CD4-positive, alpha-beta T cell (primary cell): ENCODE measurements at regions of chr2 and their contacts with region 1.

Region 1: DNA sequence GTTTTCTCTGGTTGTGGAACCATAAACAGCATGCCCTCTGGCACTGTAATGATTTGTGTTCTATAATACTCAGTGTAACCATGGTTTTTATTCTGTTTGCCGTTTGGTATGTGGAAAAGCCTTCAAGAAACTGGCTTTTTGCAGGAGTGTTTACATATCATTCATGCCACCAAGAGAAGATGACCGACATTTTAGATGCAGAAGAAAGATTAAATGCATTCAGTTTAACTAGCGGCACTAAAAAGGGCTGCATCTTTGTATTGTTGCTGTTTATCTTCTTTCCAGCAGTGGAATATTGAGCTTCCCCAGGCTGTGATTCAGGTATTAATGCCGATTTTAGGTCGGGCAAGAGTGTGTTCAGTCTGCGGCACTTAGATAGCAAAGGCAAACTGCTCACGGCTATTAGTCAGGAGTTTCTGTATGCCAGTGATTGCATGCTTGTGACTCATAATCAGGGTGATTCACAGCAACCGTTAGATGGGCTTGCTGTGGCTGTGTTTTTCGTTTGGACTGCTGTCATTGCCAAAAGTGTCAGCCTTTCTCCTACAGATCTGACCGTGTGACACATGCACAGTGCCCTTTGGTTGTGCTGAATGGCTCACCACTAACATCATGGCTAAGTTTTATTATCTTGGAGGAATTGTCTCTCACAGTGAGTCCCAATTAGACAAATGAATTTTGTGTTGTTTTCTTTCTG is 479.7 kb downstream of the PARD3B start:
- DNase-seq: peak in 1 of 14 experiments; percentile 34
- ATAC-seq: no peak
- H3K4me3 ChIP-seq: no peak overlapping the region
- H3K4me3 Mint-ChIP-seq: no peak overlapping the region
- H3K27ac ChIP-seq: no peak overlapping the region
- H3K27ac Mint-ChIP-seq: no peak overlapping the region
- H3K4me1 ChIP-seq: peaks cover 6% of the 10 kb centered on the region
- H3K4me1 Mint-ChIP-seq: peaks cover 30% of the 10 kb centered on the region
- H3K27me3 ChIP-seq: no peaks in the 10 kb centered on the region
- H3K27me3 Mint-ChIP-seq: no peaks in the 10 kb centered on the region
- CTCF ChIP-seq: no peak

Region 2: DNA sequence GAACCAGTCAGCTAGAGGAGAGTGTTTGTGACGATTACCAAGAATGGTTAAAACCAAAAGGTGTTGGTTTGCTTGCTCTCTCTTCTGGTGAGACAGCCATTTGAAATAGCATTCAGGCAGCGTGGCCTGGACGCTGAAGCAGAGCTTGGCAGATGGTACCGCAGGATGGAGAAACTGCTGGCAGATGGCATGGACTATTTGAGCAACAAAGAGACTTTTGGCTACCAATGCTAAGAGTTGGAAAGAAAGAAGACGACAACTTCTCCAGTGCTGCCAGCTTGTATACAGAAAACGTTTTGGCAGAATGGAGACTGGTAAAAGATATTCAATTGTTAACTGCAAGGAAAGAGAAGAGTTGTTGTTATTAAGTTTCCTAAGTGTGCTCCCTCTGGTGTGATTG is 164.7 kb before region 1 on chr2:
- CTCF ChIA-PET with region 1: no interaction called
- POLR2A ChIA-PET with region 1: no interaction called
- intact Hi-C with region 1: no loop called
- DNase-seq: no peak
- ATAC-seq: no peak
- H3K4me3 ChIP-seq: no peak overlapping the region
- H3K4me3 Mint-ChIP-seq: no peak overlapping the region
- H3K27ac ChIP-seq: no peak overlapping the region
- H3K27ac Mint-ChIP-seq: no peak overlapping the region
- H3K4me1 ChIP-seq: no peaks in the 10 kb centered on the region
- H3K4me1 Mint-ChIP-seq: no peaks in the 10 kb centered on the region
- H3K27me3 ChIP-seq: no peaks in the 10 kb centered on the region
- H3K27me3 Mint-ChIP-seq: peaks cover 6% of the 10 kb centered on the region
- CTCF ChIP-seq: no peak

Region 3: GRCh38 chr2:204931562-204931961 is 93.4 kb before region 1 on chr2:
- CTCF ChIA-PET with region 1: no interaction called
- POLR2A ChIA-PET with region 1: no interaction called
- intact Hi-C with region 1: loop called in 1 of 2 experiments (anchors 5 kb)
- DNase-seq: no peak
- ATAC-seq: no peak
- H3K4me3 ChIP-seq: no peak overlapping the region
- H3K4me3 Mint-ChIP-seq: no peak overlapping the region
- H3K27ac ChIP-seq: no peak overlapping the region
- H3K27ac Mint-ChIP-seq: no peak overlapping the region
- H3K4me1 ChIP-seq: no peaks in the 10 kb centered on the region
- H3K4me1 Mint-ChIP-seq: peaks cover 18% of the 10 kb centered on the region
- H3K27me3 ChIP-seq: no peaks in the 10 kb centered on the region
- H3K27me3 Mint-ChIP-seq: no peaks in the 10 kb centered on the region
- CTCF ChIP-seq: no peak

Region 4: GRCh38 chr2:205198140-205198525 is 173.2 kb after region 1 on chr2:
- CTCF ChIA-PET with region 1: no interaction called
- POLR2A ChIA-PET with region 1: no interaction called
- intact Hi-C with region 1: no loop called
- DNase-seq: no peak
- ATAC-seq: no peak
- H3K4me3 ChIP-seq: no peak overlapping the region
- H3K4me3 Mint-ChIP-seq: no peak overlapping the region
- H3K27ac ChIP-seq: no peak overlapping the region
- H3K27ac Mint-ChIP-seq: no peak overlapping the region
- H3K4me1 ChIP-seq: no peaks in the 10 kb centered on the region
- H3K4me1 Mint-ChIP-seq: peaks cover 7% of the 10 kb centered on the region
- H3K27me3 ChIP-seq: no peaks in the 10 kb centered on the region
- H3K27me3 Mint-ChIP-seq: no peaks in the 10 kb centered on the region
- CTCF ChIP-seq: no peak